Activated B cell treated with CpG ODN at 0.5 μM for 24 hours (primary cell): ENCODE measurements at regions of chr7 and their contacts with region 1.

Region 1: DNA sequence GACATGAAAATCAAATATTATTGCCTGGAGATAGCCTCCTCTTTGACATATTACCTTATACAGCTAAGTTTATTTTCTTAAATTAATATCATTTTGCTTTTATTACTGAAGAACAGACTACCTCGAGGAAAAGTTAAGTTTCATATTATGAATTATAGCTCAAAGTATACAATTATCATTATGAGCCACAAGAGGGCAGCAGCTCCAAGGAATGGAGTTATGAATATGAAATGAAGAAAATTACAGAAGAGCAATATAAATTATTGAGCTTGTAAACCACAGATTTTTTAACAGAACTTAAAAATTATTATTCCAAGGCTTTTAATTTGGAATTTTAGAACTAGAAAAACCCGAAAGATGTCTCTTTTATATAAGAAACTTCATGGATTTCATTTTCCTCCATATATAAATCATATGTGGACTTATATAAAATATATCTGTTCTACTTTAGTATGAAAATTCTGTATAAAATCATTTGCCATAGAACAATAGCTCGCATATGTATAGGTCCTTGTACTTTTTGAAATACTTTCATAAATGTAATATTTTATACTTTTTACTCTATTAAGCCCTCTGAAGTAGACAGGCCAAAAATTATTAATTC is 40.1 kb downstream of the IQUB start:
- DNase-seq: no peak
- ATAC-seq: peak; percentile 37
- H3K4me3 Mint-ChIP-seq: no peak overlapping the region
- H3K27ac Mint-ChIP-seq: no peak overlapping the region
- H3K4me1 Mint-ChIP-seq: peaks cover 2% of the 10 kb centered on the region
- H3K27me3 Mint-ChIP-seq: peaks cover 11% of the 10 kb centered on the region
- CTCF ChIP-seq: peak; percentile 90

Region 2: DNA sequence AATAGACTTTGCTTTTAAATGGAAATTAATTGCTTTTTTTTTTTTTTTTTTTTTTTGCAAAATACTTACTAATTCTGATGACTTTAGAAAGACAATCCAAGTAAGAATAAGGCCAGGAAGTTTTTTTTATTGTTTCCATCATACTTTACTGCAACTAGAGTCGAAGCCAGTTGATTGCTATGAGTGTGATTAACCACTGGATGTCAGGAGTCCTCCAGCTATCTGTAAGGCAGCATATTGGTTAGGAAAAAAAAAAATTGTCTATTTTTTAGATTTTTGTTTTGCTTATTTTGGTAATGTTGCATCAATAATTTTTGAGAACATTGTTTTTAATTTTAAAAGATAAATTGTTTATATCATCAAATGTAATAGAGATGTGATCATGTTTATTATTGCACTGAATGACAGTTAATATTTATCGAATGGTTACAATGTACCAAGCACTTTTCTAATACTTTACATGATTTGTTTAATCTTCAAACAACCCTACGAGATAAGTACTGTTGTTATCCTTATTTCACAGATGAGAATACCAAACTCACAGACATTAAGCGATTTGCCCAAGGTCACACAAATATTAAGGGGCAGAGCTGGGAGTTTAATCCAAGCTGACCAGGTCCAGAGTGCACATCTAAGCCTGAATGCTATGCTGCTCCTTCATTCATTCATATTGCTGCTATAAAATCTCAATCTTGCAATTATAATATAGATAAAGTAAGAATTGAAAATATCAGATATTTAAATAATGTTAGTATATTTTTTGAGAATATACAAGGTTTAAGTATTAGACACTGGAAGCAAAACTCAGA is 141.5 kb after region 1 on chr7:
- CTCF ChIA-PET with region 1: no interaction called
- POLR2A ChIA-PET with region 1: no interaction called
- intact Hi-C with region 1: loop called (anchors 10 kb)
- DNase-seq: no peak
- ATAC-seq: no peak
- H3K4me3 Mint-ChIP-seq: no peak overlapping the region
- H3K27ac Mint-ChIP-seq: no peak overlapping the region
- H3K4me1 Mint-ChIP-seq: no peaks in the 10 kb centered on the region
- H3K27me3 Mint-ChIP-seq: peaks cover 18% of the 10 kb centered on the region
- CTCF ChIP-seq: no peak

Region 3: GRCh38 chr7:123871998-123872867 is 377.9 kb after region 1 on chr7:
- CTCF ChIA-PET with region 1: interaction called, 5 read pairs
- POLR2A ChIA-PET with region 1: no interaction called
- intact Hi-C with region 1: loop called (anchors 2 kb)
- DNase-seq: no peak
- ATAC-seq: no peak
- H3K4me3 Mint-ChIP-seq: no peak overlapping the region
- H3K27ac Mint-ChIP-seq: no peak overlapping the region
- H3K4me1 Mint-ChIP-seq: no peaks in the 10 kb centered on the region
- H3K27me3 Mint-ChIP-seq: peaks cover 4% of the 10 kb centered on the region
- CTCF ChIP-seq: no peak

Region 4: GRCh38 chr7:124284937-124285336 is 790.6 kb after region 1 on chr7:
- CTCF ChIA-PET with region 1: no interaction called
- POLR2A ChIA-PET with region 1: no interaction called
- intact Hi-C with region 1: no loop called
- DNase-seq: no peak
- ATAC-seq: no peak
- H3K4me3 Mint-ChIP-seq: no peak overlapping the region
- H3K27ac Mint-ChIP-seq: no peak overlapping the region
- H3K4me1 Mint-ChIP-seq: no peaks in the 10 kb centered on the region
- H3K27me3 Mint-ChIP-seq: no peaks in the 10 kb centered on the region
- CTCF ChIP-seq: no peak